ENCODE measurements at regions of chr19 and their contacts with region 1.

Region 1: GRCh38 chr19:50724522-50725217 is 1.5 kb downstream of the CLEC11A start:
- DNase-seq: peak; percentile 100
- ATAC-seq: peak; percentile 74
- H3K4me3 Mint-ChIP-seq: peak overlapping the region; percentile 90
- H3K27ac Mint-ChIP-seq: peak overlapping the region; percentile 82
- H3K4me1 Mint-ChIP-seq: peaks cover 55% of the 10 kb centered on the region
- H3K27me3 Mint-ChIP-seq: peaks cover 43% of the 10 kb centered on the region
- CTCF ChIP-seq: peak; percentile 77

Region 2: DNA sequence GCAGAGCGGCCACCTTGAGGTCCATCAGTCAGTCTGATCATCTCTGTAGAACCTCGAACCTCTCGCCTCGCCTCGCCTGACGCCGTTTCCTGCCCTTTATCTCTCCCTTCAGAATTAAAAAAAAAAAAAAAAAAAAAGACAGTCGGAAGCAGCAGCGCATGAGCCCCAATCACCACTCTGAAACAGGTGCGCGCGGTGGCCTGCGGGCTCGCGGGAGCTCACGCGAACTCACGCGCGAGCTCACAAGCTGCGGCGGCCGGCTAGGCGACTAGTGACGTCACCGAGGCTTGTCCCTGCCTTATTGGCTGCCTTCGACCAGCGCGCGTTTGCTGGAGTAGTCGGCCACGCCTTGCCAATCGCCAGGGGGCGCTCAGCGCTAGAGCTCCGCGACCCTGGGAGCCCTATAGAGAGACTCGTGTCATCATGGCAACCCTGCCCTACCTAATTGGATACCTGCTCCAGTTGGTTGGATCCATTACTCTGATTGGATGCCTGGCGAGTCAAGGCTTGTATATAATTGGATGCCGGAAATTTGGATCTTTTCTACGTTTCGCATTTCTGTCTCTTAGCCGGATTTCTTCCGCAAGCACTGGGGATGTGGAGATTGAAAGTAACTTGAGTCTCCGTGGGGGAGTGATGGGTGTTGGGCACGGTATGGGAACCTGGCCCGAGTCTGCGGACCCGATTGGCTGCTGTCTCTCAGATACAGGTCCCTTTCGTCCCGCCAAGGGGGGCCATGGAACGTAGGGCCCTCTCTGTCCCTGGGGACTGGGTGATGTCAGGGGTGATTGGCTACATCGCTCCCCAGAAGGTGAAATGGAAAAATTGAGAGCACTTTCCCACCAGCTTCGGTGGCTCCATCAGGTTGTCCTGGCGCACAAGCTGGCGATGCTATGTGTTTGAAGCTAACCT is 116.5 kb before region 1 on chr19:
- CTCF ChIA-PET with region 1: interaction called, 25 read pairs
- POLR2A ChIA-PET with region 1: no interaction called
- DNase-seq: peak; percentile 100
- ATAC-seq: peak; percentile 84
- H3K4me3 Mint-ChIP-seq: peak overlapping the region; percentile 62
- H3K27ac Mint-ChIP-seq: peak overlapping the region; percentile 83
- H3K4me1 Mint-ChIP-seq: peaks cover 12% of the 10 kb centered on the region; the same call in 1 of the 2 replicates
- H3K27me3 Mint-ChIP-seq: peaks cover 74% of the 10 kb centered on the region
- CTCF ChIP-seq: peak; percentile 66

Region 3: GRCh38 chr19:50669302-50670101 is 55.2 kb before region 1 on chr19:
- CTCF ChIA-PET with region 1: interaction called, 12 read pairs
- POLR2A ChIA-PET with region 1: no interaction called
- DNase-seq: no peak
- ATAC-seq: no peak
- H3K4me3 Mint-ChIP-seq: peak overlapping the region; percentile 47
- H3K27ac Mint-ChIP-seq: no peak overlapping the region
- H3K4me1 Mint-ChIP-seq: peaks cover 23% of the 10 kb centered on the region
- H3K27me3 Mint-ChIP-seq: peaks cover 86% of the 10 kb centered on the region
- CTCF ChIP-seq: peak; percentile 95

Region 4: GRCh38 chr19:50705422-50706019 is 19.1 kb before region 1 on chr19:
- CTCF ChIA-PET with region 1: interaction called, 37 read pairs
- POLR2A ChIA-PET with region 1: no interaction called
- DNase-seq: peak; percentile 62
- ATAC-seq: peak; percentile 82
- H3K4me3 Mint-ChIP-seq: no peak overlapping the region
- H3K27ac Mint-ChIP-seq: no peak overlapping the region
- H3K4me1 Mint-ChIP-seq: peaks cover 9% of the 10 kb centered on the region; the same call in 1 of the 2 replicates
- H3K27me3 Mint-ChIP-seq: peaks cover 38% of the 10 kb centered on the region
- CTCF ChIP-seq: peak; percentile 37

Region 5: GRCh38 chr19:50745221-50745620 is 20.6 kb after region 1 on chr19:
- CTCF ChIA-PET with region 1: interaction called, 13 read pairs
- POLR2A ChIA-PET with region 1: interaction called, 3 read pairs
- DNase-seq: no peak
- ATAC-seq: no peak
- H3K4me3 Mint-ChIP-seq: no peak overlapping the region
- H3K27ac Mint-ChIP-seq: no peak overlapping the region
- H3K4me1 Mint-ChIP-seq: peaks cover 2% of the 10 kb centered on the region; the same call in 1 of the 2 replicates
- H3K27me3 Mint-ChIP-seq: peaks cover 8% of the 10 kb centered on the region
- CTCF ChIP-seq: no peak

Region 6: GRCh38 chr19:50794439-50795237 is 70.0 kb after region 1 on chr19:
- CTCF ChIA-PET with region 1: interaction called, 25 read pairs
- POLR2A ChIA-PET with region 1: interaction called, 3 read pairs
- DNase-seq: peak; percentile 36
- ATAC-seq: peak; percentile 28
- H3K4me3 Mint-ChIP-seq: no peak overlapping the region
- H3K27ac Mint-ChIP-seq: peak overlapping the region; percentile 57; the same call in 1 of the 2 replicates
- H3K4me1 Mint-ChIP-seq: peaks cover 12% of the 10 kb centered on the region
- H3K27me3 Mint-ChIP-seq: peaks cover 19% of the 10 kb centered on the region
- CTCF ChIP-seq: no peak

Region 7: DNA sequence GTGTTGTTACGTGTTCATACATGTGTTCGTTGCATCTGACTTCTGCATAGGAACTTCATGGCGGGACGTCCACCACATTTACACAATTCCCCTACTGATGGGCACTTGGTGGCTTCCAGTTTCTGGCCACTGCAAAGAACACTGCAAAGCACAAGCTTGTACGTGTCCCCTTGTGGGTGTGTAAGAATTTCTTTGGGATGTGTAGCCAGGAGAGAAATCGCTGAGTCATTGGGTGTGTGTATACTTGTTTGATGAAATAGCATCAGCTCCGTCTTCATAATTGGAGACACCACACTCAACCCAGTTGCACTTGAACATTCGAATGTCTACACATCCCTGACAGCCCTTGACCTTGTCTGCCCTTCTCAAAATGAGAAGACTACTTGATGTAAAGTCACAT is 209.0 kb after region 1 on chr19:
- CTCF ChIA-PET with region 1: no interaction called
- POLR2A ChIA-PET with region 1: no interaction called
- DNase-seq: no peak
- ATAC-seq: no peak
- H3K4me3 Mint-ChIP-seq: no peak overlapping the region
- H3K27ac Mint-ChIP-seq: no peak overlapping the region
- H3K4me1 Mint-ChIP-seq: peaks cover 6% of the 10 kb centered on the region
- H3K27me3 Mint-ChIP-seq: peaks cover 32% of the 10 kb centered on the region
- CTCF ChIP-seq: no peak